ENCODE measurements at regions of chr2 and their contacts with region 1.

Region 1: DNA sequence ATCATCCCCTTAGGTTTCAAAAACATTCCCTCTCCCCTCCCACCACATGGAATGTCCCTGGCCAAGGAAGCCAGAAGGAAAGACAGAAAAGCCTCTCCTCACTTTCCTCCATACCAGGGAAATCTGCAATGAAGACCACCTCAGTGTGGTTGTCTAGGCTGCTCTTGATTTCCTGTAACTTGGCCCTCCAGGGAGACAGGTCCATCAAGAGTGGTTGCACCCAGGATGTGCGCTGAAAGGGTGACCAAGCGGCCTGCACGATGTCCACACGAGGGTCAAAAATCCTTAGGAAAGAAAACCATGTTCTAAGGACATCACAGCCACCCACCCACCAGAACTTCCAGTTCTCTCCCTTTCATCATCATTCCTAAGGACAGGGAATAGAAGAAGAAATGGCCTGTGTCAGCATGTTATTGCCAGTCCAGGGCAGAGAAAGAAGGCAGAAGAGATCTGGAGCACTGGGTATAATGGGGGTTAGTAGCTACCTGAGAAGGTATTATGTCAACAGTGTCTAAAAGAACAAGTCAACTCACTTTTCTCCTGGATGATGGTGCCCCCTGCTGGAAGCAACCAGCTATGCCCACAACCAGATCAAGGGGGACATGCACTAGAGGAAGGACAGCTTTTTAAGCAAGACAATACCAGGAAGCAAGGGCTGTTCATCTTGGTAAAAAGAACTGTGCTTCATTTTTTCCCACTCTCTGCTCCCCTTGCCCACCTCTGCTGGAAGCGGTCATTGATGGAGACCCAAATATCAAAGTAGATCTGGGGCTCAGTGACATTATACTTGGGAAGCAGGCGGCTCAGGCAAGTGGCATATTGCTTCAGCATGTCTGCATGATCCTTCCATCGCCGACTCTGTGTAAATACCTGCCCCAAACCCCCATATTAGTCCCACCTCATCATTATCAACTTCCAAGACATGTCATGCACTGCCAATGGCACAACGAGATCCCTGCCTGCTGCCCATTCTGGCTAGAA is 9.3 kb downstream of the GGCX start:
- H3K4me3 ChIP-seq: no peak overlapping the region
- H3K27ac ChIP-seq: no peak overlapping the region
- H3K4me1 ChIP-seq: no peaks in the 10 kb centered on the region
- CTCF ChIP-seq: peak; percentile 69

Region 2: DNA sequence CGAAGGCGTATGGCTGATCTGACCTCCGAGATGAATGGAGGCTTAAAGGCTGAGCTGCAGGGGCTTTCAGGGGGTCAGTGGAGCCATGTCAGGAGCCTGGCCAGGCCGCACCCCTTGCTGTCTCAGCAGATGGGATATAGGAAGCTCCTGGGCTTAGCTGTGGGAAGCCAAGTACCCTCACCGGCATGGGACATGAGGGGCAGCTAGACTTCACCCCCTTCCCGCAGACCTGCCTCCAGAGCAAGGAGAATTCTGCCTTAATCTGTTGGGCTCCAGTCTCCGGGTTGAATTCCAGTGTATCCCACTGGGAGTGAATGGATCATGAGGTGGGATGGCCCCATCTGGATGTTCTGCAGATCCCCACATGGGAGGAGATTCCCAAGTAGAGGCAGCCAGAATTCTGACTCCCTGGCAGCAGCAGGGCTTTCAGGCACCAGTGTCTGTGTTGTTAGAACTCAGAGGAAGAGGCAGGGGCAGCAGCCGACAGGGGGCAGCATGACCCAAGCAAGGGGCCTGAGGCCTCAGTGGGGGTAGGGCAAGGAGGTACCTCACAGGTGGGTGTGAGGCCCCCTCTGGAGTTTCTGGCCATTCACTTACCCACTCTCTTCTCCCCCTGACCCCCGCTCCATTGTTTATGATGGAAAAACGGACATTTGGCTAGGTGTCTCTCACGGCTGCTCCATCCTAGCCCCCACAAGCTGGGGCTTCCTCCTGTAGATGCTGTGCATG is 160.9 kb before region 1 on chr2:
- CTCF ChIA-PET with region 1: interaction called, 62 read pairs
- POLR2A ChIA-PET with region 1: interaction called, 6 read pairs
- H3K4me3 ChIP-seq: no peak overlapping the region
- H3K27ac ChIP-seq: no peak overlapping the region
- H3K4me1 ChIP-seq: no peaks in the 10 kb centered on the region
- CTCF ChIP-seq: peak; percentile 66

Region 3: GRCh38 chr2:85935746-85936208 is 383.8 kb after region 1 on chr2:
- CTCF ChIA-PET with region 1: no interaction called
- POLR2A ChIA-PET with region 1: no interaction called
- H3K4me3 ChIP-seq: no peak overlapping the region
- H3K27ac ChIP-seq: no peak overlapping the region
- H3K4me1 ChIP-seq: peaks cover 4% of the 10 kb centered on the region; the same call in 1 of the 2 replicates
- CTCF ChIP-seq: no peak